ENCODE measurements at regions of chr2 and their contacts with region 1.

Region 1: DNA sequence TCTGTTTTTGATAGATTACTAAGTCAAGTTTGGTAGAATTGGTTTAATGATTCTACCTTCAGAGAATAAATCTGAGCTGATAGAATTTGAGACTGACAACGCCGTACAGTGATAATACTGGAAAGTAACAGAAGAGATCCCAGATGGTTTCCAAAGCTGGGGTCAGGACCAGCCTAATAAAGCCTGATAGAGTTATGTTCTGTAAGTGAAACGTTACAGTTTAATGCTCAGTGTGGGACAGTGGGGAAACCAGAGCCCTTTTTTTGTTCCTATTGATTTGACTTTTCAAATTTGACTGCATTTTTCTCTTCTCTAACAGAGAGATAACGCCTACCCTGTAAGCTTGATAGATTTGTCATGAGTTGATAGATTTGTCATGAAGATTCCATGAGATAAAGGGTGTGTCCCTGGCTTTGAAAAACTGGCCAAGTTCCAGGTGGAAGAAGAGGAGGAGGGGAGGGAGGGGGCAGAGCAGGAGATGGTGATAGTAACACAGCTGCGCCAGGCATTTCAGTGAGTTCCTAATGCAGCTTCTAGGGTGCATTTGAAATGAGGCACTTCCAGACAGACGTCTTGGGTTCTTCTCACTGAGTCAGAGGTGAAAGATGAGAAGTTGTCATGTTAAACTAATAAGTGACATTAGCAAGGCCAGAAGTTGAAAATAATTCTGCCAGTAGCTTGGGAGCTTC is 65.1 kb downstream of the CERS6 start:
- DNase-seq: no peak
- ATAC-seq: no peak
- H3K4me3 Mint-ChIP-seq: no peak overlapping the region
- H3K27ac Mint-ChIP-seq: no peak overlapping the region
- H3K4me1 Mint-ChIP-seq: peaks cover 35% of the 10 kb centered on the region
- H3K27me3 Mint-ChIP-seq: no peaks in the 10 kb centered on the region
- CTCF ChIP-seq: no peak

Region 2: DNA sequence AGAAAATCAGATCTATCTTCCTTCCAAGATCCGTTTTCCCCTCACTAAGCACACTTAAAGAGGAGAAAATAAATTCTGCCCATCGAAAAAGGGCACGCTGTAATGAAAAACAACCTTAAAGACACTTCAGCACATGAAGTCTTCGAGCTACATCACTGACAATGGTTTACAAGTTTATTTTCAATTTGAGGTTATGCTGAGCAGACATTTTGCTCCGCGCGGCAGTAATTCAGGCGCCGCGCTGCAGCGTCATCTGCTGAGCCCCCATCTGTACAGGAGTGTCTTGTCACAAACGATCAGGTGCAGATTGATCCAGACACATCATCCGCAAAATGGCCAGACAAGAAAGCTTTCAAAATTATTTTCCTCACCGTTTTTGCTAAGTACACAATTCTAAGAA is 615.5 kb before region 1 on chr2:
- CTCF ChIA-PET with region 1: no interaction called
- POLR2A ChIA-PET with region 1: no interaction called
- intact Hi-C with region 1: no loop called
- DNase-seq: no peak
- ATAC-seq: no peak
- H3K4me3 Mint-ChIP-seq: no peak overlapping the region
- H3K27ac Mint-ChIP-seq: no peak overlapping the region
- H3K4me1 Mint-ChIP-seq: peaks cover 6% of the 10 kb centered on the region
- H3K27me3 Mint-ChIP-seq: peaks cover 5% of the 10 kb centered on the region
- CTCF ChIP-seq: no peak

Region 3: DNA sequence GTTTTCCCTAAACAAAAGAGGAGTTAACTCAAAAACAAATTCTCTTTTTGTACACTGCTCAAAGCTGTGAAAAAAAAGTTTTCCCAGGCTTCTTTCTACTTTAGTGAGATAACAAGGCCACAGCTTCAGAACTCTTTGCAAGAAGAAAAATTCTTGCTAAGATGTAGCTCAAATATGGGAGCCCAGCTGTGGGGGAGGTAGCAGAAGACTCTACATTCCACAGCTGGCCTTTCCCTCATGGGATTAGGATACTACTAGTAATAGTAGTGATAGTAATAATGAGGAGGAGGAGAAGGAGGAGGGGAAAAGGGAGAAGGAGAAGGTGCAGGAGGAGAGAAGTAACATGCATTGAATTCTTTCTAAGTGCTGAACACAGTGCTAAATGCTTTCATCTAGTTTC is 84.4 kb before region 1 on chr2:
- CTCF ChIA-PET with region 1: no interaction called
- POLR2A ChIA-PET with region 1: interaction called, 12 read pairs
- intact Hi-C with region 1: no loop called
- DNase-seq: no peak
- ATAC-seq: no peak
- H3K4me3 Mint-ChIP-seq: no peak overlapping the region
- H3K27ac Mint-ChIP-seq: no peak overlapping the region
- H3K4me1 Mint-ChIP-seq: no peaks in the 10 kb centered on the region
- H3K27me3 Mint-ChIP-seq: peaks cover 3% of the 10 kb centered on the region
- CTCF ChIP-seq: no peak

Region 4: GRCh38 chr2:168503901-168504300 is 17.3 kb before region 1 on chr2:
- CTCF ChIA-PET with region 1: no interaction called
- POLR2A ChIA-PET with region 1: no interaction called
- intact Hi-C with region 1: loop called (anchors 2 kb)
- DNase-seq: no peak
- ATAC-seq: no peak
- H3K4me3 Mint-ChIP-seq: no peak overlapping the region
- H3K27ac Mint-ChIP-seq: no peak overlapping the region
- H3K4me1 Mint-ChIP-seq: peaks cover 2% of the 10 kb centered on the region
- H3K27me3 Mint-ChIP-seq: no peaks in the 10 kb centered on the region
- CTCF ChIP-seq: no peak

Region 5: DNA sequence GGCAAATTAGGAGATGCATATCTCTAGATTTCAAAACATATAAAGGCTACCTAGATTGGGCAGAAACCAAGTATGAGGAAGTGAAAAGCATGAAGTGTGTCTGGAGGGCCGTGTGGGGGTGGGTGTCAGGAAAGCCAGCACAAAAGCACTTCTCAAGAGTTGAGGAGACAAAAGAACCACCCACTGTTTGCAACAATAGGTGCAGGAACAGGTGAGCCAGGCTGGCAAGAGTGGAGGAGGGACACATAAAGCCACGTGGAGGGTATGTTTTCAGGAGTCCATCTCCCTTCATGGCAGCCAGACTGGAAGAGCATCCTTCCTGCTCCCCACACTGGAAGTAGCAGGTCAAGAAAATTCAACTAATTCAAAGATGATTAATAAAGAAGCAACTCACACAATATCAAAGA is 31.3 kb after region 1 on chr2:
- CTCF ChIA-PET with region 1: no interaction called
- POLR2A ChIA-PET with region 1: no interaction called
- intact Hi-C with region 1: no loop called
- DNase-seq: no peak
- ATAC-seq: peak; percentile 84
- H3K4me3 Mint-ChIP-seq: peak overlapping the region; percentile 19
- H3K27ac Mint-ChIP-seq: peak overlapping the region; percentile 47
- H3K4me1 Mint-ChIP-seq: peaks cover 24% of the 10 kb centered on the region
- H3K27me3 Mint-ChIP-seq: no peaks in the 10 kb centered on the region
- CTCF ChIP-seq: no peak

Region 6: DNA sequence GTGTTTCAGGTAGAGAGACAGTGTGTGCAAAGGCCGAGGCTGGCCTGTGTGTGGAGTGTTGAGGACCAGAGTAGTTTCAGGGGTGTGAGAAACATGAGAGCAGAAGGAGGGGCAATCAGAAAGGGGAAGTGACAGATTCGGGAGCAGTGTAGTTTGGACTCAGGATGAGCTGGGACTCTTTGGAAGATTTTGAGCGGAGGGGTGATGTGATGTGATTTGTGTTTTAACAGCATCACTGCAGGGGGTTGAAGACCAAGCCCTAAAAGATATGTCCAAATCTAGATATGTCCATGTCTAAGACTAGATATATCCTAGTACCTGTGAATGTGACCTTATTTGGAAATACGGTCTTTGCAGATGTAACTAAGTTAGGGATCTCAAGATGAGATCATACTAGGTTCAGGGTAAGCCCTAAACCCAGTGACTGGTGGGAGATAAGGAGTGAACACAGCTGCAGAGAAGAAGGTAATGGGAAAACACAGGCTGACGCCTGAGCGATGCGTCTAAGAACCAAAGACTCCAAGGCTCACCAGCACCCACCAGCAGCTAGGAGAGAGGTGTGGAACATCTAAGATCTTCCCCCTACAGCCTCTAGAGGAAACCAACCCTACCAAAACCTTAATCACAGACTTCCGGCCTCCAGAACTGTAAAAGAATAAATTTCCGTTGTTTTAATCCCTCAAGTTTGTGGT is 1618.2 kb after region 1 on chr2:
- CTCF ChIA-PET with region 1: no interaction called
- POLR2A ChIA-PET with region 1: no interaction called
- intact Hi-C with region 1: no loop called
- DNase-seq: no peak
- ATAC-seq: no peak
- H3K4me3 Mint-ChIP-seq: no peak overlapping the region
- H3K27ac Mint-ChIP-seq: no peak overlapping the region
- H3K4me1 Mint-ChIP-seq: peaks cover 10% of the 10 kb centered on the region
- H3K27me3 Mint-ChIP-seq: no peaks in the 10 kb centered on the region
- CTCF ChIP-seq: no peak

Measured in activated B cell treated with CpG ODN at 0.5 μM for 24 hours (primary cell).